ENCODE measurements at regions of chr6 and their contacts with region 1.

Region 1: GRCh38 chr6:32868257-32868788 is 14.3 kb downstream of the PSMB9 start:
- DNase-seq: peak; percentile 81 to 95
- ATAC-seq: peak; percentile 89 to 96 (median 93)
- H3K4me3 ChIP-seq: no peak overlapping the region
- H3K4me3 Mint-ChIP-seq: no peak overlapping the region
- H3K27ac ChIP-seq: no peak overlapping the region
- H3K27ac Mint-ChIP-seq: peak overlapping the region in 1 of 2 donors; percentile 7
- H3K4me1 ChIP-seq: peaks cover 9% of the 10 kb centered on the region
- H3K4me1 Mint-ChIP-seq: peaks cover 6 to 7% of the 10 kb centered on the region in 2 donors
- H3K27me3 ChIP-seq: no peaks in the 10 kb centered on the region
- H3K27me3 Mint-ChIP-seq: no peaks in the 10 kb centered on the region
- CTCF ChIP-seq: peak; percentile 88

Region 2: GRCh38 chr6:32551410-32551809 is 316.9 kb before region 1 on chr6:
- intact Hi-C with region 1: no loop called
- DNase-seq: no peak
- ATAC-seq: no peak
- H3K4me3 ChIP-seq: no peak overlapping the region
- H3K4me3 Mint-ChIP-seq: no peak overlapping the region
- H3K27ac ChIP-seq: no peak overlapping the region
- H3K27ac Mint-ChIP-seq: no peak overlapping the region
- H3K4me1 ChIP-seq: no peaks in the 10 kb centered on the region
- H3K4me1 Mint-ChIP-seq: peaks cover 5 to 12% of the 10 kb centered on the region in 2 donors
- H3K27me3 ChIP-seq: no peaks in the 10 kb centered on the region
- H3K27me3 Mint-ChIP-seq: peaks cover 0 to 13% of the 10 kb centered on the region in 2 donors
- CTCF ChIP-seq: no peak

Region 3: GRCh38 chr6:32700391-32701040 is 167.8 kb before region 1 on chr6:
- intact Hi-C with region 1: loop called (anchors 2 kb)
- DNase-seq: peak in 1 of 2 donors; percentile 76
- ATAC-seq: peak; percentile 56 to 75 (median 58)
- H3K4me3 ChIP-seq: no peak overlapping the region
- H3K4me3 Mint-ChIP-seq: no peak overlapping the region
- H3K27ac ChIP-seq: no peak overlapping the region
- H3K27ac Mint-ChIP-seq: no peak overlapping the region
- H3K4me1 ChIP-seq: peaks cover 2% of the 10 kb centered on the region
- H3K4me1 Mint-ChIP-seq: peaks cover 0 to 7% of the 10 kb centered on the region in 2 donors
- H3K27me3 ChIP-seq: peaks cover 8% of the 10 kb centered on the region
- H3K27me3 Mint-ChIP-seq: peaks cover 42 to 60% of the 10 kb centered on the region in 2 donors
- CTCF ChIP-seq: peak; percentile 71

Region 4: GRCh38 chr6:32838114-32838958 is 30.0 kb before region 1 on chr6 and contains the start of gene TAP2:
- intact Hi-C with region 1: loop called (anchors 1 kb)
- DNase-seq: peak; percentile 97 to 99
- ATAC-seq: peak; percentile 88 to 99 (median 88)
- H3K4me3 ChIP-seq: peak within 1 kb of the TSS; percentile 63
- H3K4me3 Mint-ChIP-seq: peak within 1 kb of the TSS; percentile 95
- H3K27ac ChIP-seq: peak within 1 kb of the TSS; percentile 80
- H3K27ac Mint-ChIP-seq: peak within 1 kb of the TSS; percentile 96 to 100
- H3K4me1 ChIP-seq: peaks cover 46% of the 10 kb centered on the region
- H3K4me1 Mint-ChIP-seq: peaks cover 69 to 84% of the 10 kb centered on the region in 2 donors
- H3K27me3 ChIP-seq: no peaks in the 10 kb centered on the region
- H3K27me3 Mint-ChIP-seq: no peaks in the 10 kb centered on the region
- CTCF ChIP-seq: peak; percentile 91
- total RNA-seq, gene TAP2: 162 to 221 (median 209) TPM

Region 5: DNA sequence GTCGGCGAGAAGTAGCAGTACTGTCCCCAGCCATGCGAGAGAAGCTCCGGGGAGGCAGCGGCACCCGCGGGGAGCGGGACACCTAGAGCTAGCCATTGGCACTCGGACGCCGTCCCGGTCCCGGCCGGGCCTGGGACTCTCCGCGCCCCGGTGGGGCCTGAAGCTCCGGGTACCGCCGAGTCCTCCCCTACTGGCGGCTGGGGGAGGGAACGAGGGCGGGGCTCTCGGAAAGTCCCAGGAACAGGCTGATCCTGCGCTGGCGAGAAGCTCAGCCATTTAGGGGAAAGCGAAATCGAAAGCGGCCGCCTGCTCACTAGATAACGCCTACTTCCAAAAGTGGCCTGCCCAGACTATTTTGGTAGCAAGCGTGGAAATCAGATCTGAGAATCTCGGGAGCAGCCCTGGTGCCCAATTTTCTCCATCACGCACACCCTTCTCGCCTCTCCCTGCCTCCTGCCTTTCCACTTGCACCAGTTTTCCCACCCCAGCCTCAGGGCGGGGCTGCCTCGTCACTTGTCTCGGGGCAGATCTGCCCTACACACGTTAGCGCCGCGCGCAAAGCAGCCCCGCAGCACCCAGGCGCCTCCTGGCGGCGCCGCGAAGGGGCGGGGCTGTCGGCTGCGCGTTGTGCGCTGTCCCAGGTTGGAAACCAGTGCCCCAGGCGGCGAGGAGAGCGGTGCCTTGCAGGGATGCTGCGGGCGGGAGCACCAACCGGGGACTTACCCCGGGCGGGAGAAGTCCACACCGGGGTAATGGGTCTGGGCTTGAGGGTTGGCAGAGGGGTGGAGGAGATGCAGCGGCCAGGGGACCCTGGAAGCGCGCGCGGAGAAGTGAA is 14.6 kb before region 1 on chr6 and contains the starts of genes PSMB9 and TAP1:
- intact Hi-C with region 1: loop called (anchors 1 kb)
- DNase-seq: peak; percentile 90 to 98
- ATAC-seq: peak; percentile 76 to 92 (median 80)
- H3K4me3 ChIP-seq: peak within 1 kb of the TSS; percentile 95
- H3K4me3 Mint-ChIP-seq: peak within 1 kb of the TSS; percentile 99
- H3K27ac ChIP-seq: peak within 1 kb of the TSS; percentile 99
- H3K27ac Mint-ChIP-seq: peak within 1 kb of the TSS; percentile 100
- H3K4me1 ChIP-seq: peaks cover 65% of the 10 kb centered on the region
- H3K4me1 Mint-ChIP-seq: peaks cover 73 to 84% of the 10 kb centered on the region in 2 donors
- H3K27me3 ChIP-seq: no peaks in the 10 kb centered on the region
- H3K27me3 Mint-ChIP-seq: no peaks in the 10 kb centered on the region
- CTCF ChIP-seq: peak; percentile 78
- total RNA-seq, gene PSMB9: 112 to 190 (median 182) TPM
- total RNA-seq, gene TAP1: 134 to 193 (median 179) TPM

Region 6: GRCh38 chr6:32940656-32941213 is 72.4 kb after region 1 on chr6 and contains the start of gene HLA-DMB:
- intact Hi-C with region 1: no loop called
- DNase-seq: peak; percentile 31 to 90
- ATAC-seq: peak; percentile 71 to 80 (median 78)
- H3K4me3 ChIP-seq: peak within 1 kb of the TSS; percentile 74
- H3K4me3 Mint-ChIP-seq: peak within 1 kb of the TSS; percentile 88
- H3K27ac ChIP-seq: peak within 1 kb of the TSS; percentile 96
- H3K27ac Mint-ChIP-seq: peak within 1 kb of the TSS; percentile 92 to 98
- H3K4me1 ChIP-seq: peaks cover 75% of the 10 kb centered on the region
- H3K4me1 Mint-ChIP-seq: peaks cover 59 to 60% of the 10 kb centered on the region in 2 donors
- H3K27me3 ChIP-seq: no peaks in the 10 kb centered on the region
- H3K27me3 Mint-ChIP-seq: no peaks in the 10 kb centered on the region
- CTCF ChIP-seq: no peak
- total RNA-seq, gene HLA-DMB: 19.5 to 28.1 (median 23.0) TPM